ENCODE measurements at regions of chr4 and their contacts with region 1.

Region 1: DNA sequence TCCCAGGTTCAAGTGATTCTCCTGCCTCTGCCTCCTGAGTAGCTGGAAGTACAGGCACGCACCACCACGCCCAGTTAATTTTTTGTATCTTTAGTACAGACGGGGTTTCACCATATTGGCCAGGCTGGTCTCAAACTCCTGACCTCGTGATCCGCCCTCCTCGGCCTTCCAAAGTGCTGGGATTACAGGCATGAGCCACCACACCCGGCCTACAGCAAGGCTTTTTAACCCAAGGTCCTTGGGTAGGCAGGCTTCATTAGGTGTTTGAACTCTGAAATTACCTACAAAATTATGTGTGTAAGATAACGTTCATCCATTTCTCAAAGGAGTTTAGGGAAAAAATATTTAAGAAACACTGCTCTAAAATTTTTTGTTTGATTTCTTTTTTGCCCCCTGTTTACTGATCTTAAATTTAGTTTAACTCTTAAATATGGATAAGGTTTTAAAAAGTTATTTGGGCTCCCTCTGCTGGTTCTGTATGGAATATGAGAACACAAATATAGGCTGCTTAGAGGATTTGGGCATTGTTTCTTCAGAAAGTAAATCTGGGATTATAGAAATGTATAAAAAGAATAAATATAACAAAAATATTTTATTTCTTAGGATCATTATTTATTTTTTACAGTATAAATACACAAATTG is 92.8 kb downstream of the CBR4 start:
- DNase-seq: no peak
- H3K4me3 Mint-ChIP-seq: no peak overlapping the region
- H3K27ac Mint-ChIP-seq: no peak overlapping the region
- H3K4me1 Mint-ChIP-seq: no peaks in the 10 kb centered on the region
- H3K27me3 Mint-ChIP-seq: no peaks in the 10 kb centered on the region

Region 2: GRCh38 chr4:168183717-168184608 is 733.3 kb before region 1 on chr4:
- CTCF ChIA-PET with region 1: interaction called, 7 read pairs
- POLR2A ChIA-PET with region 1: no interaction called
- intact Hi-C with region 1: loop called (anchors 1 kb)
- DNase-seq: no peak
- H3K4me3 Mint-ChIP-seq: no peak overlapping the region
- H3K27ac Mint-ChIP-seq: no peak overlapping the region
- H3K4me1 Mint-ChIP-seq: no peaks in the 10 kb centered on the region
- H3K27me3 Mint-ChIP-seq: no peaks in the 10 kb centered on the region

Region 3: DNA sequence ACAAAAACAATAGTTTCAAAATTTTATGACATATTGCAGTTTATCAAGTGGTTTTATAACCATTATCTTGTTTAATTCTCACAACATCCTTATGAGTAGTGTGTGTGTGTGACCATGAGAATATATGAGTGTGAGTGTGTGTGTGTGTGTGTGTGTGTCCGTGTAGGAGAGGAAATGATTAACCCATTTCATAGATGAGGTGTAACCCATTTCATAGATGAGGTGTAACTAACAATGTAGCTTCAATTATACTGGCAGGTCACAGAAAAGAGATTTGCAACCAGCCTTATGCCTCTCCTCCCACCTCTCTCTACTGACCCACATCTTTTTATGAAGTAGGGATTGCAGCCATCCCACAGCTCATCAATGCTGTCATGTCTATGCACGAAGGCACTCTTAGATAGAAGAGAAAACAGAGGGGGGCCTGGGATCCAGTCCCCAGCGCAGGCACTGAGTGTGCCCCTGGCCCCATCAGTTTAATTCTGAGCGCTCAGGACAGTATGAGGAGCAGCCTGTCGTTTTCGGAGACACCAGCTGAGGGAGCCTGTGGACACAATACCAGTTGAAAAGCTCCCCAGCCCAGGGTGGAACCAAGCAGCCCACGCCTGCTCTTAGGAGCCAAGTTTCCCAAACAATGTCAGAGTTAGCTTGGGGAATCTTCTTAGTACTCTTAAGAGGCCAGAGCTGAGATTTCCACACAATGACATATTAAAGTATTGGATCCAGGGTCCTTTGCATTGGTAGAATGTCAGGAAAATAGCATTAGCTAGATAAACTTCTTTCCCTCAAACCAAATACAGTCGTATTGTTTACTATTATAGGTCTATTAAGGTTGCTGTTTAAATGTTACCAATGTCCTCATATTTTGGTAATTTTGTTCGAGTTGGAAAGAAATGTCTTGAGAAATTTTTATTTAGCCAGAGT is 331.8 kb before region 1 on chr4:
- CTCF ChIA-PET with region 1: interaction called, 8 read pairs
- POLR2A ChIA-PET with region 1: no interaction called
- intact Hi-C with region 1: loop called (anchors 5 kb)
- DNase-seq: peak; percentile 43
- H3K4me3 Mint-ChIP-seq: no peak overlapping the region
- H3K27ac Mint-ChIP-seq: no peak overlapping the region
- H3K4me1 Mint-ChIP-seq: peaks cover 1% of the 10 kb centered on the region
- H3K27me3 Mint-ChIP-seq: peaks cover 12% of the 10 kb centered on the region

Region 4: GRCh38 chr4:168710353-168710946 is 206.8 kb before region 1 on chr4:
- CTCF ChIA-PET with region 1: interaction called, 11 read pairs
- POLR2A ChIA-PET with region 1: no interaction called
- intact Hi-C with region 1: loop called (anchors 2 kb)
- DNase-seq: no peak
- H3K4me3 Mint-ChIP-seq: no peak overlapping the region
- H3K27ac Mint-ChIP-seq: no peak overlapping the region
- H3K4me1 Mint-ChIP-seq: peaks cover 7% of the 10 kb centered on the region
- H3K27me3 Mint-ChIP-seq: peaks cover 5% of the 10 kb centered on the region

Region 5: DNA sequence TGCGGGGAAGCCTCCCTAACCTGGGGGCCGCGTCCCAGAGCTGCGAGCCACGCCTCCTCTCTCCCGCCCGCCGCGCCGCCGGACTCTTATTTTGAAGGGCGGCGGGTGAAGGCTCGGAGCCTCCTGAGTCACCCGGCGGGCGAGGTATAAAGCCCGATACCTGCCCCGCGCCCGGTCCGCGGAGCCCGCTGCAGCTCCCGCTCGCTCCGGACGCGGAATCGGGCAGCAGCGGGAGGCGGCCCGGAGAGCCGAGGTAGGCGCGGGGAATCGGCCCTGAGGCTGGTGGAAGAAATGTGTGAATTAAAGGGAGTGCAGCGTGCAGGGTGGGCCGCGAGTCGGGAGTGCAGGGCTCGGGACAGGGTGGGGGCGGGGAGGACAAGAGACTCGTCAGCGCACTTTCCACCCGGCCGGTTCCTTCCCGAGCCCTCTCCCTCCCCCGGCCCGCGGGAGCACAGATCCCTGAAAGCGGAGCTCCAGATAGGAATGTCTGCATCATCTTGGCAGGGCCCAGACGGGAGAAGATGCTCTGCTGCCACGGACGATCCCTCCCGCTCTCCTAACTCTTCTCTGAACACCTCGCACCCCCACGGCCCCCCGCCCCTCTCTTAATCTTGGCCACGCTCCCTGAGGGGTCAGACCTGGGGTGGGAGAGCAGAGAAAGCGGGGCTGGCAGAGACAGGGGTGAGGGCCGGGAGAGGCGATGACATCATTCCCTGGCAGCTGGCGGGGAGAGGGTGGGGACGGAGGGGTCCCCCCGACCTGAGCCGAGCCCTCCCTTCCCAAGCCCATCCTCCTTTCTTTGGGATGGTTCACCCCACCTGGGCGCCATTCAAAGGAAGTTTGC is 85.1 kb before region 1 on chr4:
- CTCF ChIA-PET with region 1: no interaction called
- POLR2A ChIA-PET with region 1: no interaction called
- intact Hi-C with region 1: loop called (anchors 5 kb)
- DNase-seq: peak; percentile 75
- H3K4me3 Mint-ChIP-seq: peak overlapping the region; percentile 74
- H3K27ac Mint-ChIP-seq: peak overlapping the region; percentile 33
- H3K4me1 Mint-ChIP-seq: peaks cover 19% of the 10 kb centered on the region
- H3K27me3 Mint-ChIP-seq: peaks cover 47% of the 10 kb centered on the region

Region 6: GRCh38 chr4:168900080-168900479 is 17.2 kb before region 1 on chr4:
- CTCF ChIA-PET with region 1: no interaction called
- POLR2A ChIA-PET with region 1: no interaction called
- intact Hi-C with region 1: no loop called
- DNase-seq: no peak
- H3K4me3 Mint-ChIP-seq: no peak overlapping the region
- H3K27ac Mint-ChIP-seq: no peak overlapping the region
- H3K4me1 Mint-ChIP-seq: no peaks in the 10 kb centered on the region
- H3K27me3 Mint-ChIP-seq: no peaks in the 10 kb centered on the region

Region 7: DNA sequence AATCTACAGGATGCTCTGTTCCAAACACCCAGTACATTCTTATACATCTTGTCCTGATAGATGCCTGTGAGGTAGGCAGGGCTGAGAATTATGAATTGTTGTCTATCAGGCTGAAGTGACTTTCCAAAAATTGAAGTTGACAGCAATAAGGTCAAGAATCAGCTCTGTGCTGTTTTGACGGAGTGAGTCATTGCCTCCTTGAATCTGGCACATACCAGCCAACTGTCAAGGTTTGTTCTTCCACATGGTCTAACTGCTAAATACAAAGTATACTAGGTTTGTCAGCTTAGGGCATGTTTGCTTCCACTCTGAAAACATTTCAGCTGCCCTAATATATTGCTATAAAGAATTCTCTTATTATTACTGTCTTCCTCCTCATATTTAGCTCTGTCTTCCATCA is 321.2 kb after region 1 on chr4:
- CTCF ChIA-PET with region 1: no interaction called
- POLR2A ChIA-PET with region 1: no interaction called
- intact Hi-C with region 1: no loop called
- DNase-seq: no peak
- H3K4me3 Mint-ChIP-seq: no peak overlapping the region
- H3K27ac Mint-ChIP-seq: no peak overlapping the region
- H3K4me1 Mint-ChIP-seq: no peaks in the 10 kb centered on the region
- H3K27me3 Mint-ChIP-seq: peaks cover 9% of the 10 kb centered on the region